ENCODE measurements at regions of chr11 and their contacts with region 1.

Region 1: GRCh38 chr11:2420502-2421225 is 20.1 kb downstream of the TSSC4 start:
- DNase-seq: peak; percentile 76 to 92
- ATAC-seq: peak; percentile 94
- H3K4me3 ChIP-seq: no peak overlapping the region
- H3K27ac ChIP-seq: no peak overlapping the region
- H3K4me1 ChIP-seq: no peaks in the 10 kb centered on the region
- H3K27me3 ChIP-seq: no peaks in the 10 kb centered on the region

Region 2: GRCh38 chr11:2196970-2197770 is 223.5 kb before region 1 on chr11:
- intact Hi-C with region 1: loop called (anchors 1 to 2 kb)
- DNase-seq: peak; percentile 80 to 88
- ATAC-seq: peak; percentile 73
- H3K4me3 ChIP-seq: no peak overlapping the region
- H3K27ac ChIP-seq: no peak overlapping the region
- H3K4me1 ChIP-seq: no peaks in the 10 kb centered on the region
- H3K27me3 ChIP-seq: no peaks in the 10 kb centered on the region

Measured in aorta (tissue), 5 donors.